Activated CD8-positive, alpha-beta T cell treated with anti-CD3 and anti-CD28 coated beads, Interleukin-2, amount 10 ng/mL, durations not matched to agents 7 days and 5 days (primary cell): ENCODE measurements at regions of chr2 and their contacts with region 1.

Region 1: GRCh38 chr2:98487806-98488651 is 43.4 kb downstream of the INPP4A start:
- DNase-seq: peak; percentile 59
- ATAC-seq: peak; percentile 37
- H3K4me3 Mint-ChIP-seq: no peak overlapping the region
- H3K27ac Mint-ChIP-seq: peak overlapping the region; percentile 8
- H3K4me1 Mint-ChIP-seq: peaks cover 96% of the 10 kb centered on the region
- H3K27me3 Mint-ChIP-seq: no peaks in the 10 kb centered on the region

Region 2: DNA sequence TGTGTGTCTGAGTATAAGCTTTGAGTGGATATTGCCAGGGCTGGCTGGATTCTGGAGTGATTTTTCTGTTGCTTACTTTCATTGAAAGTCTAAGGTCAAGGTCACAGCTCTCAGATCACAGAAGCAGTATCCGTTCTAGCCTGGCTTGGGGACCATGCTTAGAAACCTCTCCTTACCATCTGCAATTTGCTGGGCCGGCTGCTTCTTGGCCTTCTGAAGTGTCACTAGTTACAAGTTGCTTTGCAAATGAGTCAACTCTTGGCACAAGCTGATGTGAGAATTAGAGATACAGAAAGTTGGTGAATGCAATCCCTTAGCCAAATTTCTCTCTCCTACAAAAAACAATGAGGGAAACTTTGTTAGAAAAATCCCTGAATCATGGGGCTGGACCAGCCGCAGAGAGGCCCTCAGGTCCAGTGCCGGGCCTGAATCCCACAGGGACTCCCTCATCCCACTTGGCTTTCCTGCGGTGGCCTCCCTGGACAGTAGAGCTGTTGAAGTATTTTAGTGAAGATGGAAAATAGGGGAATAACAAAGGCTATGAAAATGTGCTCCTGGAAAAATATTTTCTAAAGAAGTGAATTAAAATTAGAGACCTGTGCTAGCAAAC is 234.5 kb before region 1 on chr2:
- CTCF ChIA-PET with region 1: no interaction called
- POLR2A ChIA-PET with region 1: no interaction called
- DNase-seq: no peak
- ATAC-seq: no peak
- H3K4me3 Mint-ChIP-seq: no peak overlapping the region
- H3K27ac Mint-ChIP-seq: no peak overlapping the region
- H3K4me1 Mint-ChIP-seq: no peaks in the 10 kb centered on the region
- H3K27me3 Mint-ChIP-seq: peaks cover 18% of the 10 kb centered on the region

Region 3: GRCh38 chr2:98444436-98445176 is 43.4 kb before region 1 on chr2 and contains the start of gene INPP4A:
- CTCF ChIA-PET with region 1: interaction called, 18 read pairs
- POLR2A ChIA-PET with region 1: interaction called, 7 read pairs
- DNase-seq: peak; percentile 78
- ATAC-seq: peak; percentile 72
- H3K4me3 Mint-ChIP-seq: peak within 1 kb of the TSS; percentile 95
- H3K27ac Mint-ChIP-seq: peak within 1 kb of the TSS; percentile 92
- H3K4me1 Mint-ChIP-seq: peaks cover 33% of the 10 kb centered on the region
- H3K27me3 Mint-ChIP-seq: no peaks in the 10 kb centered on the region
- total RNA-seq, gene INPP4A: 152 to 157 TPM

Region 4: GRCh38 chr2:98465456-98466226 is 22.4 kb before region 1 on chr2:
- CTCF ChIA-PET with region 1: interaction called, 49 read pairs
- POLR2A ChIA-PET with region 1: interaction called, 43 read pairs
- DNase-seq: peak; percentile 86
- ATAC-seq: peak; percentile 57
- H3K4me3 Mint-ChIP-seq: peak overlapping the region; percentile 73
- H3K27ac Mint-ChIP-seq: peak overlapping the region; percentile 94
- H3K4me1 Mint-ChIP-seq: peaks cover 89% of the 10 kb centered on the region
- H3K27me3 Mint-ChIP-seq: no peaks in the 10 kb centered on the region

Region 5: DNA sequence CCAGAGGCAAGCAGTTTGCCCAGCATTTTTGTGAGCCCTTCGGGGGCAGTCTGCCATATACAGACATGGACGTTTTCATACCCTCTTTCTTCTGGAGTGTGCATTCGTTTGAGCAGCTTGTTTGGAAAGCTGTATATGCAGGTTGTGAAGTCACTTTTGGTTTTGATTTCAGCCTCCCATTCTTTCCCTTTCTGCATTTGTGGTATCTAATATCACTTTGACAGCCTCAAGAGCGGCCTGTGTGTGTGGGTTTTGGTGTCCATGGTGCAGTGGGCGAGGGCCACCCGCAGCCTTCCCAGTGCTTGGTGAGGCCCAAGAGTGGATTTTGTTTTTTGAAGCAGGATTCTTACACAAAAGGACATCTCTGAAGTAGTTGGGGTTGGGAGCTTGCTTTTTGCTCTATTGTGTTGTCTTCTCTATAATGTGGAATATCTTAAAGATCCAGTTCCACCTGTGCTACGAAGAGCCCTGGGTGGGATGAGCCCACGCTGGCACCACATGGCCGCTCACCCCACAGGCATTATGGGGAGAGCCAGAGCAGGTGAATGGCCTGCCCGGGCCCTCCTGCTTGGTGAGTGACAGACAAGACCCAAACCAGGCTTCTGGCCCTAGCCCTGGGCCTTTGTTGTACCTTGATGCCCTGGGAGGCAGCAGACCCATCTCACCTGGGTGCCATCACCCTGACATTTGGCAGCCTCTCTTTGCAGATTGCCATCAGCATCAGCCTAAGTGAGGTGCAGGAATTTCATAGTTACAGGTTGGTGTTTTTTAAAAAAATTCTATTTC is 13.8 kb before region 1 on chr2:
- CTCF ChIA-PET with region 1: interaction called, 22 read pairs
- POLR2A ChIA-PET with region 1: no interaction called
- DNase-seq: peak; percentile 19
- ATAC-seq: peak; percentile 58
- H3K4me3 Mint-ChIP-seq: peak overlapping the region; percentile 56
- H3K27ac Mint-ChIP-seq: peak overlapping the region; percentile 85
- H3K4me1 Mint-ChIP-seq: peaks cover 96% of the 10 kb centered on the region
- H3K27me3 Mint-ChIP-seq: no peaks in the 10 kb centered on the region

Region 6: GRCh38 chr2:98508709-98509066 is 20.7 kb after region 1 on chr2:
- CTCF ChIA-PET with region 1: interaction called, 26 read pairs
- POLR2A ChIA-PET with region 1: interaction called, 3 read pairs
- DNase-seq: peak; percentile 62
- ATAC-seq: peak; percentile 80
- H3K4me3 Mint-ChIP-seq: peak overlapping the region; percentile 0
- H3K27ac Mint-ChIP-seq: peak overlapping the region; percentile 81
- H3K4me1 Mint-ChIP-seq: peaks cover 96% of the 10 kb centered on the region
- H3K27me3 Mint-ChIP-seq: no peaks in the 10 kb centered on the region

Region 7: GRCh38 chr2:98560256-98560771 is 72.3 kb after region 1 on chr2:
- CTCF ChIA-PET with region 1: interaction called, 10 read pairs
- POLR2A ChIA-PET with region 1: no interaction called
- DNase-seq: no peak
- ATAC-seq: no peak
- H3K4me3 Mint-ChIP-seq: peak overlapping the region; percentile 35
- H3K27ac Mint-ChIP-seq: peak overlapping the region; percentile 71
- H3K4me1 Mint-ChIP-seq: peaks cover 78% of the 10 kb centered on the region
- H3K27me3 Mint-ChIP-seq: no peaks in the 10 kb centered on the region